ENCODE measurements at regions of chr11 and their contacts with region 1.

Region 1: GRCh38 chr11:82373781-82374542 is 359.7 kb downstream of the FAM181B start:
- DNase-seq: no peak
- ATAC-seq: no peak
- H3K4me3 ChIP-seq: no peak overlapping the region
- H3K27ac ChIP-seq: no peak overlapping the region
- H3K4me1 ChIP-seq: no peaks in the 10 kb centered on the region
- H3K27me3 ChIP-seq: no peaks in the 10 kb centered on the region
- CTCF ChIP-seq: no peak
- EP300 ChIP-seq: no peak
- POLR2A ChIP-seq: no peak
- RAD21 ChIP-seq: no peak

Region 2: DNA sequence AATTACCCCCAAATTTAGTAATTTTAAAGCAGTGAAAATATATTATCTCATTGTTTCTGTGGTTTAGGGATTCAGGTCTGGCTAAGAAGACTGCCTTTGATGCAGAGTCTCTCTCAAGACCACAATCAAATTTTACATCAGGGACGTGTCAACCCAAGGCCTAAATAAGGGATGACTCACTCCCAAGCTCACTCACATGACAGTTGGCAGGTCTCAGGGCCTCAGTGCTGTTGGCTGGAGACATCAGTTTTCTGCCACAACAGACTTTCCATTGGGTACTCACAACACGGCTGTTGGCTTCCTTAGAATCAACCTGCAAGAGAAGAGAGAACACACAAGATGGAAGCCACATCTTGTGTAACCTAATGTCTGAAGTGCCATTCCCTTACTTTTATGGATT is 17.6 kb before region 1 on chr11:
- CTCF ChIA-PET with region 1: no interaction called
- POLR2A ChIA-PET with region 1: no interaction called
- in situ Hi-C with region 1: no loop called
- intact Hi-C with region 1: loop called (anchors 2 kb)
- DNase-seq: no peak
- ATAC-seq: no peak
- H3K4me3 ChIP-seq: no peak overlapping the region
- H3K27ac ChIP-seq: no peak overlapping the region
- H3K4me1 ChIP-seq: no peaks in the 10 kb centered on the region
- H3K27me3 ChIP-seq: no peaks in the 10 kb centered on the region
- CTCF ChIP-seq: no peak
- EP300 ChIP-seq: no peak
- POLR2A ChIP-seq: no peak
- RAD21 ChIP-seq: no peak

Measured in HepG2 (cell line).